Activated naive CD4-positive, alpha-beta T cell treated with anti-CD3 and anti-CD28 coated beads for 36 hours (primary cell): ENCODE measurements at regions of chr1 and their contacts with region 1.

Region 1: DNA sequence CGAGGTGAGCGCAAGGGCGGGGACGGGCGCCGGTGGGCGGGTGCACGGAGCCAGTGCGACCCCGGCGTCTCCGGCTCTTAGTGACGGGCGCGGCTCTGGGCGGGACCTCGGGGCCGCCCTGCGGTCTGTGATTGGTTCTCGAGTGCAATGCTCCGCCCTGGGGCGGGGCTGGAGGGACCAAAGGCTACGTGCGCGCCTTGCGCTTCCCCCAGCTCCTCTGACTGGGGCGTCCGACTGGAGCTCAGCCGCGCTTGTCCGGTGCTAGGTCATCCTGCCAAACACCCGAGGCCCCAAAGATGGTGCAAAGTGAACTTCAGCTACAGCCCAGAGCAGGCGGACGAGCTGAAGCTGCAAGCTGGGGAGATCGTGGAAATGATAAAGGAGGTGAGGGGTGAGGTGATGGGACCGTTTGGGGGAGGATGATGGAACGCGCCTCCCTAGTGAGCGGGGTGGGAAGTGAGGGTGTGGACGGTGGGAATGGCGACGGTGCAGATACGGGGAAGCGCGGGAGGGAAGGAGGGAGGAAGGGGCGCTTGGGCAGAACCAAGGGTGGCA is 811 bp downstream of the SH3D21 start:
- DNase-seq: peak; percentile 89
- H3K4me3 Mint-ChIP-seq: peak overlapping the region; percentile 96
- H3K27ac Mint-ChIP-seq: no peak overlapping the region
- H3K4me1 Mint-ChIP-seq: peaks cover 48% of the 10 kb centered on the region
- H3K27me3 Mint-ChIP-seq: no peaks in the 10 kb centered on the region

Region 2: GRCh38 chr1:36088575-36089443 is 218.2 kb before region 1 on chr1 and contains the start of gene ADPRS:
- CTCF ChIA-PET with region 1: no interaction called
- intact Hi-C with region 1: loop called (anchors 5 kb)
- DNase-seq: peak; percentile 92
- H3K4me3 Mint-ChIP-seq: peak within 1 kb of the TSS; percentile 87
- H3K27ac Mint-ChIP-seq: peak within 1 kb of the TSS; percentile 72
- H3K4me1 Mint-ChIP-seq: peaks cover 20% of the 10 kb centered on the region
- H3K27me3 Mint-ChIP-seq: peaks cover 21% of the 10 kb centered on the region
- total RNA-seq, gene ADPRS: 23.2 to 24.6 TPM

Region 3: DNA sequence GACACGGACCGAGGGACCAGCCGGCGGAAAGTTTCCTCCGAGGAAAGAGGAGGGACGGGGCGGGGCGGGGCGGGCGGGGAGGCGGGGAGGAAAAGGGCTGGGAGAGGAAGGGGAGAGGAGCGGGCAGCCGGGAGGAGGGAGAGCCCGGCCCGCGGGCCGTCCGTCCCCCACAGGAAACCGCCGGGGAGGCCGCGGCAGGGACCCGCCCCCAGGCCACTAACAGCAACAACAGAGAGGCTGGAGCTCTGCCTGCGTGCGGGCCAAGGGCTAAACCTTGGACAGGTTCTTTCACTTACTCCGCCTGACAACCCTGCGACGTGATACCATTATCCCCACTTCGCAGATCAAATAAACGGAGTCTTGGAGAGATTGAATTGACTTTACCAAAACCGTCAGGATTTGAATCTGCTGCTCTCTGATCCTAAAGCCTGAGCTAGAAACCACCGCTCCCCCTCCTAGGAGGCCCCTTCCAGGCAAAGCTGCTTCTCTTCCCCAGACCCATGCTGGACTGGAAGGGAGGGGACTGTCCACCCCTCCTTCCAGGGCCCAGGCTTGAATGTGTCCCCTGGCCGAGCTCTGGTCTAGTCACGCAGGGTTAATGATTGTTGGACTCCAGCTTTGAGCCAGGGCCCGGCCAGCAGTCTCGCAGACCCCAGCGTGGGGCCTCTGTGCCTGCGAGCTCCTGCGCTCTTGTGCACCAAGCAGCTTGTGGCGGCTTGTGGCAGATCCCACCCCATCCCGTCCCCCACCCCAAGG is 16.8 kb after region 1 on chr1 and contains the start of gene EVA1B:
- CTCF ChIA-PET with region 1: interaction called, 6 read pairs
- intact Hi-C with region 1: loop called (anchors 2 kb)
- DNase-seq: peak; percentile 63
- H3K4me3 Mint-ChIP-seq: peak within 1 kb of the TSS; percentile 68
- H3K27ac Mint-ChIP-seq: no peak within 1 kb of the TSS
- H3K4me1 Mint-ChIP-seq: peaks cover 16% of the 10 kb centered on the region
- H3K27me3 Mint-ChIP-seq: peaks cover 5% of the 10 kb centered on the region
- total RNA-seq, gene EVA1B: 1.9 to 2.1 TPM

Region 4: DNA sequence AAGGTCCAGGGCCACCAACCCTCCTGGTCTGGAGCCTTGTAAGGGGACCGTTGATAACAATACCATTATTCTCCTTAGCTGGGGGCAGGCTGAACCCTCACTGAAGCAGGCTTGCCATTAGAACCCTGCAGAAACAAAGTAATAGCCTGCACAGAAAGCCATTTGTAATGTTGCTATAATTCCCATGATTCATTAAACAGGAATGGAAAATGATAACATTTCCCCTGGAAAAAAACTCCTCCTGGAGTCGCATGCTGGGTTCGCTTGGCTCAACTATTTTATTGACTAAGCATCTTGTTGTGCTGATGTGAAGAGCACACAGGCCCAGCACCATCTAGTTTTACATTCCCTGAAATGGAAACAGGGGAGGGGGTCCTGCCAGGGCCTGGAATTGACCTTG is 331.3 kb after region 1 on chr1:
- CTCF ChIA-PET with region 1: no interaction called
- intact Hi-C with region 1: no loop called
- DNase-seq: no peak
- H3K4me3 Mint-ChIP-seq: no peak overlapping the region
- H3K27ac Mint-ChIP-seq: no peak overlapping the region
- H3K4me1 Mint-ChIP-seq: no peaks in the 10 kb centered on the region
- H3K27me3 Mint-ChIP-seq: no peaks in the 10 kb centered on the region